HCT116 (cell line): ENCODE measurements at regions of chr7 and their contacts with region 1.

Region 1: DNA sequence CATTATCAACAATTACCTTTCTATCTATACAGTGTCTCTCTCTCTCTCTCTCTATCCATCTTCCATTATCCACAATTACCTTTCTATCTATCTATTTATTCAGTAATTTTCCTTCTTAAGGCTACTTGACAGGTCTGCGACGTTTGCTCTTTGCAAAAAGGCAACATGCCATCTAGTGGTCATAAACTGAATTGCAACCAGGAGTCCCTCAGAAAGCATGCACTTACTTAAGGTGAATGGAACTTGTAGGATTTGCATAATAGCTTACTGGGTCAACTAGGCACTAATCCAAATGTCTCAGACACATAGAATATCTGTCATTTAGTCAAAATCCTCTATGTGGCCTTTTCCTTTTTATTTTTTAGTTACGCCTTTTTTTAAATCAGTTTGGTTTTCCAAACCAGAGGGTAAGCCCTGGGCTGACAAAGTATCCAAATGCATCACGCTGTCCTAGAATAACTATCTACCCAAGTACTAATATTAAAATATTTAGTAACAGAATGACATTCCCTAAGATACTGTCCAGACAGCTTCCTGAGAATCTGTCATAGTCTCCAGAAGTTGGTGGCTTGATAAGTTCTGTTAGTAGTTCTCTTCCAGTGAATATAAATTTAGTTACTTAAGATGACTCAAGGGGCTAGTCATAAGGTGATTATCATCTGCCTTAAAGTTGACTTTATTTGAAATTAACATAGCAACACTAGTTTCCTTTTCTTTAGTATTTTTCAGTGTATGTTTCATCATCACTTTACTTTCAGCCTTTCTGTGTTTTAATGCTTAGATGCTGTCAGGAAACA is 208.3 kb downstream of the PPP1R3A start:
- DNase-seq: peak; percentile 85
- ATAC-seq: peak; percentile 95
- H3K4me3 ChIP-seq: no peak overlapping the region
- H3K27ac ChIP-seq: no peak overlapping the region
- H3K4me1 ChIP-seq: no peaks in the 10 kb centered on the region
- H3K27me3 ChIP-seq: no peaks in the 10 kb centered on the region
- CTCF ChIP-seq: peak; percentile 51 to 95 (median 82); a peak in 5 of 6 replicates
- POLR2A ChIP-seq: no peak
- RAD21 ChIP-seq: peak; percentile 68

Region 2: DNA sequence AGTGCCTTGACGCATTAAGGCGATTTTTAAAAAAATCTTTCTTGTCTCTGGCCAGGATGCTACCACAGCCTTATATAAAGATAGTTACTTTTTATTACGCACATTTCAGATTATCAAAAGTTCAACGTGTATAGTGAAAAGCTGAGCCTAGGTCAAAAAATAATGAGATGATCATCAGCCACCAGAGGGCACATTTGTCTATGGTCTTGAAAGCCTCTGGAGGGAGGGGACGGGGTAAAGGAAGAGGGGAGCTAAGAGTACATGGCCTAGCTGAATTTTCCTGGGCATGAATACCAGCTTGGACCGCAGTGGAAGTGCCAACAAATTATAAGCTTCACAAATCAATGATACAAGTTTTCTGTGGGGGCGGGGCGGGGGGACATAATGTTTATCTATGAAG is 306.3 kb before region 1 on chr7:
- CTCF ChIA-PET with region 1: interaction called, 7 read pairs
- POLR2A ChIA-PET with region 1: no interaction called
- RAD21 ChIA-PET with region 1: no interaction called
- intact Hi-C with region 1: loop called (anchors 5 kb)
- DNase-seq: peak; percentile 29
- ATAC-seq: peak; percentile 87
- H3K4me3 ChIP-seq: no peak overlapping the region
- H3K27ac ChIP-seq: no peak overlapping the region
- H3K4me1 ChIP-seq: no peaks in the 10 kb centered on the region
- H3K27me3 ChIP-seq: no peaks in the 10 kb centered on the region
- CTCF ChIP-seq: peak; percentile 40 to 55 (median 43); a peak in 5 of 6 replicates
- POLR2A ChIP-seq: no peak
- RAD21 ChIP-seq: peak; percentile 58

Region 3: DNA sequence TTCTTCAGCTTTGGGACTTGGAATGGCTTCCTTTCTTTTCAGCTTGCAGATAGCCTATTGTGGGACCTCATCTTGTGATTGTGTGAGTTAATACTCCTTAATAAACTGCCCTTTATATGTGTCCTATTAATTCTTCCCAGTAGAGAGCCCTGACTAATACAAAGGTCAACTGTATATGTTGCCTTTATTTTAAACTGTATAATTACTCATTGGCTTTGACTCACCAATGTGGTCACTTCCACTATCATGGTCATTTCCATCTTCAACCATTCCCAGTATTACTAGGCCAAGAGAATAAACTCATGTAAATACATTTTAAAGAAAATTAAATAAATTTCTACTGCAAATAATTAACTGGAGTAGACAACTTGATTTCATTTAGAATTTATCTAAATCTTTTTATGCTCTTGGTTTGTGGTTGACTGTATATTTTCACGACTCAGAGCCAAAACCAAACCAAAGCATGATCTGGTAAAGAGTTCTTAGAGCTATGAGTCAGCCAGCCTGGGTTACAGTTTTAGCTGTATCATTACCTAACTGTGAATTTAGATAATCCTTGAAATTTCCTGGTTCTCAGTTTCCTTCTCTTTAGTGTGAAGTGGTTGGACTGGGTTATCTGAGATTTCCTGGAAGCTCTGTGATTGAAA is 19.9 kb after region 1 on chr7:
- CTCF ChIA-PET with region 1: interaction called, 3 read pairs
- POLR2A ChIA-PET with region 1: no interaction called
- RAD21 ChIA-PET with region 1: no interaction called
- intact Hi-C with region 1: loop called (anchors 2 kb)
- DNase-seq: no peak
- ATAC-seq: peak; percentile 38; the same call in 1 of the 2 replicates
- H3K4me3 ChIP-seq: no peak overlapping the region
- H3K27ac ChIP-seq: no peak overlapping the region
- H3K4me1 ChIP-seq: peaks cover 0 to 5% of the 10 kb centered on the region in 2 experiments; a peak in 2 of 4 replicates
- H3K27me3 ChIP-seq: no peaks in the 10 kb centered on the region
- CTCF ChIP-seq: no peak
- POLR2A ChIP-seq: no peak
- RAD21 ChIP-seq: no peak

Region 4: GRCh38 chr7:114392686-114393085 is 682.2 kb after region 1 on chr7:
- CTCF ChIA-PET with region 1: no interaction called
- POLR2A ChIA-PET with region 1: no interaction called
- RAD21 ChIA-PET with region 1: no interaction called
- intact Hi-C with region 1: no loop called
- DNase-seq: no peak
- ATAC-seq: no peak
- H3K4me3 ChIP-seq: no peak overlapping the region
- H3K27ac ChIP-seq: no peak overlapping the region
- H3K4me1 ChIP-seq: no peaks in the 10 kb centered on the region
- H3K27me3 ChIP-seq: no peaks in the 10 kb centered on the region
- CTCF ChIP-seq: no peak
- POLR2A ChIP-seq: no peak
- RAD21 ChIP-seq: no peak